Activated B cell treated with CpG ODN at 0.5 μM for 24 hours (primary cell): ENCODE measurements at regions of chr18 and their contacts with region 1.

Region 1: GRCh38 chr18:824179-824578 is 12.1 kb upstream of the YES1 start:
- DNase-seq: no peak
- ATAC-seq: no peak
- H3K4me3 Mint-ChIP-seq: no peak overlapping the region
- H3K27ac Mint-ChIP-seq: no peak overlapping the region
- H3K4me1 Mint-ChIP-seq: no peaks in the 10 kb centered on the region
- H3K27me3 Mint-ChIP-seq: peaks cover 30% of the 10 kb centered on the region
- CTCF ChIP-seq: no peak

Region 2: GRCh38 chr18:666177-666576 is 158.0 kb before region 1 on chr18:
- CTCF ChIA-PET with region 1: no interaction called
- POLR2A ChIA-PET with region 1: no interaction called
- intact Hi-C with region 1: no loop called
- DNase-seq: no peak
- ATAC-seq: no peak
- H3K4me3 Mint-ChIP-seq: no peak overlapping the region
- H3K27ac Mint-ChIP-seq: no peak overlapping the region
- H3K4me1 Mint-ChIP-seq: no peaks in the 10 kb centered on the region
- H3K27me3 Mint-ChIP-seq: no peaks in the 10 kb centered on the region
- CTCF ChIP-seq: no peak

Region 3: GRCh38 chr18:839224-840022 is 15.2 kb after region 1 on chr18:
- CTCF ChIA-PET with region 1: interaction called, 13 read pairs
- POLR2A ChIA-PET with region 1: no interaction called
- intact Hi-C with region 1: no loop called
- DNase-seq: peak; percentile 70
- ATAC-seq: peak; percentile 87
- H3K4me3 Mint-ChIP-seq: no peak overlapping the region
- H3K27ac Mint-ChIP-seq: no peak overlapping the region
- H3K4me1 Mint-ChIP-seq: no peaks in the 10 kb centered on the region
- H3K27me3 Mint-ChIP-seq: peaks cover 9% of the 10 kb centered on the region
- CTCF ChIP-seq: peak; percentile 31